ENCODE measurements at regions of chr17 and their contacts with region 1.

Region 1: DNA sequence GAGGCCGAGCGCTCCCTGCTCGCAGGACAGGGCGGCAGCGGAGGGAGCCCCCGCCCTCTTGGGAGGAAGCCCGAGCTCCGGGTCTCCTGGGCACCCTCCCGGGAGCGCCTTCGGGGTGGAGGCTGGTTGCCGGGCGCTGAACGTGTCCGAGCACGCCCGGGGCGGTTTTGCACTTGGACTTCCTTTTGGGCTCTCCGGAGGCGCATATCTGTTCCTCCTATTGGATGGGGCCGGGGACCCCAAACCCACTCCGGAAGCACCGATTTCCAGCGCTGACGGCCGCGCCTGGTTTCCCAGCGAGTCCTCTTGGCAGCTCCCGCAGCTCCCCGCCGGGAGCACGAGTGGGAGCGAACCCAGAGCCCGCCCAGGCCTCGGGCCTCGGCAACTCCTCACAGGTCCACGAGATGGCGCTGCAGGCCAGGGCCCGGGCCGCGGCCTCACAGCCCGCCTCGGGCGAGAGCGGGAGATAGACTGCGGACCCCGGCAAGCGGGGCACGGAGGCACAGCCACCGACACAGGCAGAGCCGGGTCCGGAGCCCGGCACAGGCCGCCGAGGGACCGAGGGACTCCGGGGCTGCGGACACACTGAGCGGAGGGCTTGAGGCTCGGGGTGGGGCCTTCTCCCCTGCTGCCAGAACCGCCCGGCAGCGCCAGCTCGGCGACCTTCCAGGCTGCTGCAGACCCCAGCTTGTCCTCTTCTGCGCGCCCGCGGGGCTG is 12.7 kb downstream of the TBX2 start:
- H3K4me3 ChIP-seq: peak overlapping the region; percentile 46
- H3K27ac ChIP-seq: peak overlapping the region; percentile 72
- H3K4me1 ChIP-seq: peaks cover 4% of the 10 kb centered on the region
- CTCF ChIP-seq: peak; percentile 98

Region 2: DNA sequence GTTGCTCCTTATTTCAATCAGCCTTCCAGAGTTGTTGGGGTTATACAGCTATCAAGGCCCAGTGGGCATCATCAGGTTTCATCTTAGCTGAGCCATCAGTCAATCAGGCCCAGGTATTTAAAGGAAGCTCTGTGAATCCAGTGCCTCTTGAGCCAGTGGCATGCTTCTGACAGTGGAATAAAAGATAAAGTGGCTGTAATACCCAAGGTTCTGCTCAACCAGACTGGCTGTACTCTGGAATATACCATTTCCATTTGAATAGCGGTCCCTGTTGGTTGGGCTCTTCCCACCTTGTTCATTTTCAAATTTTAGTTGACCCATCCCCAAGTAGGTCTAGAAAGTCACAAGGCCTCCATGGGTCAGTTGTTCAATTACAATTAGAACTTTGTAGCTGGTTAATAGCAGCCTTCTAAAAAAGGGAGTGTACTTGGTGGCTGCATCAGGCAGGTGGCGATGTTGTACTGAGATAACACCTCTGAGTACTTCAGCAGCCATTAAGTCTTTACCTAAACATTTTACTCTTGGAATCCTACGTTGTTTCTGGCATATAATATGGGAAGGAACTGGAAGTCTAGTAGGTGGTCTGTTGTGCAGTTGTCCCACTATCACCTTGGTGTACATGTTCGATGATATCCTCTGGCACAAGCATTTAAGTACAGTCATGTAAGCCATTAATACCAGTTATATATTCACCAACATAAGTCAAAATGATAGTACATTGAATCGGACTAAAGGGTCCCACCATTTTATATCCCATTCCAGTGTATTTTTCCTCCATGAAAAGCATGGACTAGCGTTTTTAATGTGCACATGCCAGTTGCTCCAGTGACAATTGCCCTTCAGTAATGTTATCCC is 440.6 kb before region 1 on chr17:
- CTCF ChIA-PET with region 1: interaction called, 17 read pairs
- POLR2A ChIA-PET with region 1: no interaction called
- H3K4me3 ChIP-seq: no peak overlapping the region
- H3K27ac ChIP-seq: no peak overlapping the region
- H3K4me1 ChIP-seq: no peaks in the 10 kb centered on the region
- CTCF ChIP-seq: no peak

Region 3: DNA sequence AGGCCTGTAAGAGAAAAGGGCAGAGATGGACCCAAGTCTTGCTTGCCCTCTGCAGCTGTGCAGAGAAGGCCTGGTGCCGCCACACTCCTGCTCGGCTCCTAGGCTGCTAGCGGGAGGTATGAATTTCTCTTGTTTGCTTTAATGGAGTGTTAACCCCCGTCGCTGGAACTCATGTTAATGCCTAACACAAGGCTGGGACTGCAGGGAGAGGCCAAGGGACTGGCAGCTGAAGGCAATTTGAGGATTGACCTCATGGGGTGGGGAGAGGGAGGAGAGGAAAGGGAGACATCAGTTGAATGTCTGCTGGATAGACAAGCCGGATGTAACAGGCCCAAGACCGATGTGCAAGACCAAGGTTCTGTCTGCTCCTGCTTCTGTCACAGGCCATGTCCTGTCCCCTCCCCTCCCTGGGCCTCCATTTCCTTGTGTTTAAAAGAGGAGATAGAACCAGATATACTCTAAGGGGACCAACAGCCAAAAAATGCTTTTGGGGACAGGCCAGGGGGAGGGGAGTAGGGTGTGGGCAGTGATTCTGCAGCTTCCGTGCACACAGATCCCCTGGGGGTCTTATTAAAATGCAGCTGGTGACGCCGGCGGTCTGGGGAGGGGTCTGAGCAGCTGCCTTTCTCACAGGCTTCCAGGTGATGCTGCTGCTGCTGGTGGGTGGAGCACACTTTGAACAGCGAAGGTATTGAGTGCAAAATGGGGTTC is 59.4 kb before region 1 on chr17:
- CTCF ChIA-PET with region 1: no interaction called
- POLR2A ChIA-PET with region 1: no interaction called
- H3K4me3 ChIP-seq: no peak overlapping the region
- H3K27ac ChIP-seq: no peak overlapping the region
- H3K4me1 ChIP-seq: no peaks in the 10 kb centered on the region
- CTCF ChIP-seq: no peak

Region 4: GRCh38 chr17:61399131-61400057 is 12.9 kb before region 1 on chr17 and contains the start of gene TBX2:
- CTCF ChIA-PET with region 1: interaction called, 28 read pairs
- POLR2A ChIA-PET with region 1: interaction called, 29 read pairs
- H3K4me3 ChIP-seq: peak within 1 kb of the TSS; percentile 81
- H3K27ac ChIP-seq: peak within 1 kb of the TSS; percentile 97
- H3K4me1 ChIP-seq: peaks cover 3% of the 10 kb centered on the region; the same call in 1 of the 2 replicates
- CTCF ChIP-seq: peak; percentile 55

Region 5: DNA sequence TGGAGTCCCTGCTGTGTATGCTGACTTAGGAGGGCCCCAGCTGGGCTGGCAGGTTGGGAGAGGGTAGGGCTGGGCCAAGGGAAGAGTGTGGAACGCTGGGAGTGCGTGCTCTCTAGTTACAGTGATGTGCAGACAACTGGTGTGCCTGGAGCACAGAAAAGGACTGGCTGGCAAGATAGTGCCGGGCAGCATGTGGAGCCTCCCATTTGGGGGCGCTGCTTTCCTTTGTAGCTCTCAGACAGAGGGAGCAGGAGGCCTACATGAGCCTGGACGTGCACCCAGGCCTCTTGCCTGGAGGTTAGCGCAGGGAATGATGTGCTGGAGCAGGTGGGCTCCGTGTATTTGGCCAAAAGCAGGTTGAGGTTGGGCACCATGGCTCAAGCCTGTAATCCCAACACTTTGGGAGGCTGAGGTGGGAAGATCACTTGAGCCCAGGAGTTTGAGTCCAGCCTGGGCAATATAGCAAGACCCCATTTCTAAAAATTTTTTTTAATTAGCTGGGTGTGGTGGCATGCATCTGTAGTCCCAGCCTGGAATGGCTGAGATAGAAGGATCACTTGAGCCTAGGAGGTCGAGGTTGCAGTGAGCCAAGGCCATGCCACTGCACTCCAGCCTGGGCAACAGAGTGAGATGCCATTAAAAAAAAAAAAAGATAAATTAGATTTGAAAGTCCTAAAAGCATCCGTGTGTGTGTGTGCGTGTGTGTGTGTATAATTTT is 13.9 kb after region 1 on chr17:
- CTCF ChIA-PET with region 1: interaction called, 16 read pairs
- POLR2A ChIA-PET with region 1: no interaction called
- H3K4me3 ChIP-seq: no peak overlapping the region
- H3K27ac ChIP-seq: no peak overlapping the region
- H3K4me1 ChIP-seq: no peaks in the 10 kb centered on the region
- CTCF ChIP-seq: no peak

Region 6: GRCh38 chr17:61551255-61551742 is 139.0 kb after region 1 on chr17:
- CTCF ChIA-PET with region 1: interaction called, 32 read pairs
- POLR2A ChIA-PET with region 1: no interaction called
- H3K4me3 ChIP-seq: no peak overlapping the region
- H3K27ac ChIP-seq: no peak overlapping the region
- H3K4me1 ChIP-seq: no peaks in the 10 kb centered on the region
- CTCF ChIP-seq: peak; percentile 46; the same call in 1 of the 2 replicates

Region 7: GRCh38 chr17:61574542-61575174 is 162.4 kb after region 1 on chr17:
- CTCF ChIA-PET with region 1: interaction called, 29 read pairs
- POLR2A ChIA-PET with region 1: interaction called, 3 read pairs
- H3K4me3 ChIP-seq: no peak overlapping the region
- H3K27ac ChIP-seq: no peak overlapping the region
- H3K4me1 ChIP-seq: no peaks in the 10 kb centered on the region
- CTCF ChIP-seq: peak; percentile 44; the same call in 1 of the 2 replicates

Region 8: DNA sequence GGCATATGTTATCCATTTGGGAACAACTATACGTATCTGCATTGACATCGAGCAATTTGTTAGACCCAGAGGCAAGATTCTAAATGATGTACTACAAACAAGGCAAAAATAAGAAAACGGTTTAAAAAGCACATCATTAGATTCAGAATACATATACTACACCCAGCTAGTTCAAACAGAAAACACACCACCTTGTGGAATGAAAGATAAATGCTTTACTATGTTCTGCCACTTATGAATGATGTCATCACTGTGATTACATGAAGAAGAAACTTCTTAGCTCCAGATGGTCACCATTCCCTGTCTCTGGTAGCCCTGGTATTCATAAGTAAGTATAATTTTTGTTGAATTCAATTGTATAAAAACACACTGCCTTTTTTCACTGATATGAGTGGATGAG is 170.9 kb after region 1 on chr17:
- CTCF ChIA-PET with region 1: interaction called, 38 read pairs
- POLR2A ChIA-PET with region 1: no interaction called
- H3K4me3 ChIP-seq: no peak overlapping the region
- H3K27ac ChIP-seq: no peak overlapping the region
- H3K4me1 ChIP-seq: peaks cover 8% of the 10 kb centered on the region; the same call in 1 of the 2 replicates
- CTCF ChIP-seq: peak; percentile 36; the same call in 1 of the 2 replicates

Measured in HEK293 (cell line).